ENCODE measurements at regions of chr6 and their contacts with region 1.

Region 1: DNA sequence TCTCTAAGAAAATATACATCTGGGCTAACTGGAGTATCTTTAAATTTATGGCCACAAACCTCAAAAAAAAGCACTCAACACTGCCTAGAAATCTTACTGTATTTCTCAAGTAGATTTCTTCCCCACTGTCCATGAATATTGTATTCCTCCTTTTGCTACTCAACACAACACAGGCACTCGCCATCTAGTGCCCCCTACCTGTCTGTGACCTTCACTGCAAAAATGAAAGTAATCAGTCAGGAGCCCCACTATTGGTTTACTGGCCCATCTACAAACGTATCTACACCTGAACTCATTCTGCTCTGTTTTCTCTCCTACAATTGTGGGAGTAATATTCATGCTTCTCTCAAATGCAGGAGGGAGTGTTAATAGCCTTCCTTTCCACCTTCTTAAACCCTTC is 58.3 kb downstream of the LY86 start:
- DNase-seq: no peak
- ATAC-seq: no peak
- H3K4me3 ChIP-seq: no peak overlapping the region
- H3K4me3 Mint-ChIP-seq: no peak overlapping the region
- H3K27ac ChIP-seq: no peak overlapping the region
- H3K27ac Mint-ChIP-seq: no peak overlapping the region
- H3K4me1 ChIP-seq: no peaks in the 10 kb centered on the region
- H3K4me1 Mint-ChIP-seq: peaks cover 4 to 44% (median 10%) of the 10 kb centered on the region in 7 donors
- H3K27me3 ChIP-seq: no peaks in the 10 kb centered on the region
- H3K27me3 Mint-ChIP-seq: no peaks in the 10 kb centered on the region

Region 2: DNA sequence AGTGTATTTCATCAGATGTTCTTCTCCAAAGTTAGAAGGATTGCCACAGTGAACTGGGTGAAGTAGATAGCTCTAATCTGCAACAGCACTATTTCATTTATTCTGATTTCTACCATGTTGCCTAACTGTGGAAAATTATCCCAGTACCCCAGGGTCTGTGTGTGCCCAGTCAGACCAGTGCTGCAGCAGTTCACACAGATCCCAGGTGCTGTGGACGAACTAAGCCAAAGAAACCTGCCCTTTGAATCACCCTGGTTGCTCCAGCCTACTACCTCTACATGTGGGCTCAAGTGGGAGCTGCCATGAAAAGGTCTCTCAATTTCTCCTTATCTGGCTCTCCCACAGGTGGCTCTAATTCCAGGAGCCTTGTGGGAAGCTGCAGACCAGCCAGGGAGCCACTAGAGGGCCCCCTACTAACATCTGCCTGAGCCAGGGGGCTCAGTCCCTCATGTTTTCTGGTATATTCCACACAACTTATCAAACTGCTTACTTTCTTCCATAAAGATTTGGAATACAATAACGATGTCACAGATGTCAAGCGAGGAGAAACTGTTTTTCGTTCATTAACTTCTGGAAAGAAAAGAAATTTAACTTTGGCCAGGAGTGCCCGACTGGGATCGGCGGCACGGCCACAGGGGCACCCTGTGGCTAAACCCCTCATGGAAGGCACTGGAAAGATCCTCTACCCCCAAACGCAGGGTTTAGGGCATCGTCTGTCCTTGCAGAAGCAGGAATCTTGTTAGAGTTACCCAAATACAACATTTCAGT is 89.9 kb before region 1 on chr6:
- CTCF ChIA-PET with region 1: no interaction called
- POLR2A ChIA-PET with region 1: no interaction called
- intact Hi-C with region 1: loop called in 1 of 2 experiments (anchors 2 kb)
- DNase-seq: peak in 7 of 9 donors; percentile 30 to 68 (median 57)
- ATAC-seq: peak; percentile 76
- H3K4me3 ChIP-seq: no peak overlapping the region
- H3K4me3 Mint-ChIP-seq: no peak overlapping the region
- H3K27ac ChIP-seq: no peak overlapping the region
- H3K27ac Mint-ChIP-seq: peak overlapping the region in 5 of 9 donors; percentile 19 to 64 (median 32)
- H3K4me1 ChIP-seq: peaks cover 0 to 4% of the 10 kb centered on the region in 2 donors
- H3K4me1 Mint-ChIP-seq: peaks cover 0 to 50% (median 18%) of the 10 kb centered on the region in 7 donors
- H3K27me3 ChIP-seq: no peaks in the 10 kb centered on the region
- H3K27me3 Mint-ChIP-seq: peaks cover 0 to 15% (median 0%) of the 10 kb centered on the region in 5 donors

Region 3: DNA sequence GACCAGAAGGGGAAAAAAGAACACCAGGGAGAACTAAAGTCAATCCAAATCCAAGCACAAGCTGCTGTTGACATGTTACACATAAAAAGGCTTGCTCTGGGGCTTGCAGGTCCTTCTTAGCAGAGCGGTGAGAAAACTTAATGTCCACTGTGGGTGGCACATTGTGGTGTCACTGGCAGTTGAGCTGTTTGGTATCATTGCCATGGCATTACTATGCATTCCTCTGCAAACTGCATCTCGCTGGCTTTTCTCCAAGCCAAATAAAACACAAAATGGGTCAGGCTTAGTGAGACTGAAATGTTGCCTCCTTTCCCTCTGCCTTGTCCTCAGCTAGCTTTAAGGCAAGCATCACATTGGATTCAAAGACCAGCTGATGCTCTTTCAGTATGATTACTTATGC is 17.5 kb before region 1 on chr6:
- CTCF ChIA-PET with region 1: interaction called, 3 read pairs
- POLR2A ChIA-PET with region 1: interaction called, 3 read pairs
- intact Hi-C with region 1: loop called in 1 of 2 experiments (anchors 1 kb)
- DNase-seq: no peak
- ATAC-seq: no peak
- H3K4me3 ChIP-seq: no peak overlapping the region
- H3K4me3 Mint-ChIP-seq: no peak overlapping the region
- H3K27ac ChIP-seq: no peak overlapping the region
- H3K27ac Mint-ChIP-seq: no peak overlapping the region
- H3K4me1 ChIP-seq: peaks cover 0 to 5% of the 10 kb centered on the region in 2 donors
- H3K4me1 Mint-ChIP-seq: peaks cover 8 to 39% (median 26%) of the 10 kb centered on the region in 7 donors
- H3K27me3 ChIP-seq: no peaks in the 10 kb centered on the region
- H3K27me3 Mint-ChIP-seq: peaks cover 0 to 5% (median 0%) of the 10 kb centered on the region in 5 donors

Measured in naive thymus-derived CD4-positive, alpha-beta T cell (primary cell).